ENCODE measurements at regions of chr5 and their contacts with region 1.

Region 1: DNA sequence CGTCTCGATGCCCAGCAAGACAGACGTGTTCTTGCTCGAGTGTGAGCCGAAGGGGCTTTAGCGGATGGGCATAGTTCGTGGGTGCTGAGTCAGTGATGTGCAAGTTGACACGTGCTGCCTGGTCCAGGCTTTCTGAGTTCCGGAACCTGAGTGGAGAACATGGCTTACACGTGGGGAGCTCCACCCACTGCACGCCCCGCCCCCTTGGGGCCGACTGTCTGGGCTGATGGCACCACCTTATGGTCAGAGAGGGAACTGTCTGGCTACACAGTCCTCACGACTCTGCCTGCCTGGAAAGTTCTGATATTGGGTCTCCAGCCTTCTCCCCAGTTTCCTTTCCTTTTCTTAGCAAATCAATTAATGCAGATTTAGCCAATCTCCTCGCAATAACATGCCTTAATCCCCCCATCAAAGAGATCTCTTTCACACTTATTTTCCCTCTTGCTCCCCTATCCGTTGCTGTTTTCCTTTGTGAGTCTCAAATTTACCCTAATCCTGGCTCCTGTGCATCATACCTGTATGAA is 3.8 kb upstream of the STC2 start:
- DNase-seq: peak; percentile 95
- H3K4me3 Mint-ChIP-seq: no peak overlapping the region
- H3K27ac Mint-ChIP-seq: no peak overlapping the region
- H3K4me1 Mint-ChIP-seq: peaks cover 20% of the 10 kb centered on the region
- H3K27me3 Mint-ChIP-seq: peaks cover 37% of the 10 kb centered on the region

Region 2: GRCh38 chr5:172559004-172559932 is 772.8 kb before region 1 on chr5:
- CTCF ChIA-PET with region 1: no interaction called
- intact Hi-C with region 1: no loop called
- DNase-seq: no peak
- H3K4me3 Mint-ChIP-seq: no peak overlapping the region
- H3K27ac Mint-ChIP-seq: no peak overlapping the region
- H3K4me1 Mint-ChIP-seq: no peaks in the 10 kb centered on the region
- H3K27me3 Mint-ChIP-seq: peaks cover 4% of the 10 kb centered on the region

Region 3: GRCh38 chr5:172932313-172933017 is 399.6 kb before region 1 on chr5:
- CTCF ChIA-PET with region 1: no interaction called
- intact Hi-C with region 1: loop called (anchors 1 kb)
- DNase-seq: peak; percentile 79
- H3K4me3 Mint-ChIP-seq: no peak overlapping the region
- H3K27ac Mint-ChIP-seq: no peak overlapping the region
- H3K4me1 Mint-ChIP-seq: no peaks in the 10 kb centered on the region
- H3K27me3 Mint-ChIP-seq: no peaks in the 10 kb centered on the region

Region 4: DNA sequence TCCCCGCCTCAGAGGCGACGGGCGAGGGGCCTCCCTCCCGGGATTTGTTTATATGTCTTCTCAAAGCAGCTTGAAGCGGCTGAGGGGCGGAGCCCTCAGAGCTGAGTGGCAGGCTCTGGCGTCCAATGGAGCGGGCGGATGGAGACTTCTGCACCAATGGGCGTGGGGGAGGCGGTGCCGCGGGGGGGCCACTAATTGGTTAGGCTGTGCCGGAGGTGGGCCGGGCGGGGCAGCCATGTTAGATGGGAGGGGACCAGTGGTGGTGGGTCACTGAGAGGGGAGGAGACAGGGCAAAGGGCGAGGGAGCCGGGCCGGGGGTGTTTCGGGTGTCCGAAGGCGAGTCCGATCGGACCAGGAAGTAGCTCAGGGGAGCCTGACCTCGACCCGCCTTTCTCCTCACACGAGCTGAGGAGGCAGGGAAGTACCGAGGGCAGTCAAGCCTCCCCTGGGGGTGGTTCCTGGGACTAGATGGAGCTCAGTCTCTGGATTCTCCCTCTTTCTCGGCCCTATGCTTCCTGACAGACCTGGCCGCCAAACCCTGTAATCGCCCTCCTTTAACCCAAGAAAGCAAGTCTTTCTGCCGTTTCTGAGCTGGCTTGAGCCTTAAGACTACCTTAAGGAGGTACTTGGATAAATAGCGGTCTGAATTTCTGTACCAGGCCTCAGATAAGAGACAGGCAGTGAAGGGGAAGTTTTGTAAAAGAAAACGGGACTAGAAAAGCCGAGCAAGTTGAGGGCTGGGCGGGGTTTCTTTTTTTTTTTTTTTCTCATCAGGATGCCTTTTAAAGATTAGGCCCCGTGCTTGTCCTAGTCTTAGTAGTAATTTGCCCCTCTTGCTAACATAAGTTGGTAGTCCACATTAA is 274.7 kb before region 1 on chr5:
- CTCF ChIA-PET with region 1: no interaction called
- intact Hi-C with region 1: loop called (anchors 1 kb)
- DNase-seq: peak; percentile 100
- H3K4me3 Mint-ChIP-seq: peak overlapping the region; percentile 91
- H3K27ac Mint-ChIP-seq: peak overlapping the region; percentile 97
- H3K4me1 Mint-ChIP-seq: peaks cover 51% of the 10 kb centered on the region
- H3K27me3 Mint-ChIP-seq: no peaks in the 10 kb centered on the region

Region 5: DNA sequence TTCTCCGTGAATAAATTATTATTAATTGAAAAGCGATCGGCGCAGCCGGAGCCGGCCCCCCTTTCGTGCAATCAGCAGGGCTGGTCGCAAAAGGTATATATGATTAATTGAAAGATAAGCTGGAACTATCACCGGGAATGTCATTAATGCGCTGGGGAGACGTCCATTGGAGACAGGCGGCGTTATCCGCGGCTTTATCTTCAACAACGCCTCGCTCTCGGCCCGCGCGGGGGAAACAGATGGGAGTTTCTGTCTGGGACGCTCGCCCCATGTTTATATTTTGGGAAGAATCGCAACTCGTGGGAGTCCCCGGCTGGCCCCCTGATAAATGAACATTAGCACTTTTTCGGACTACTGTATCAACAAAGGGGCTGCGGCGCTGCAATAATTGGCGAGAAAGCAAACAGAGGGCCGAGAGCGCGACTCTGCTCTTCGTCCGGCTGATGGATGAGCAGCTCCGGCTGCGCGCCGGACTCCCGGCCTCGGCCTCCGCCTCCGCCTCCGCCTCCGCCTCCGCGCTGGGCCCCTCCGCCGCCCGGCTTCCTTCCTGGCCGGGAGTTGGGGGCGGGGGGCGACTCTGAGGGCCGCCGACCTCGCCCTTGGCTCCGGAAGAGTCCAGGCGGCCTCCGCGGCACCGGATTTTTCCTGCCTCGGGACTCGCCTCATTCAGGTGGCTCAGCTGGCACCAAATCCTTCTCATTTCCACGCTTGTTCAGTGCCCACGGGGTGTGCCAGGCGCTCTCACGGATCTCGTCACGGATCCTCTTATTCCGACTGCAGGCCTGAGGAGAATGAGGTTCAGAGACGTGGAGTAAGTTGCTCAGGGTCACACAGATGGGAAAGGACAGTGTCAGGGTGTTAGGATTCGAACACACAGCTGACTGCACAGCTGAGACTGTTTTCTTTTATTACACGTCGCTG is 93.4 kb before region 1 on chr5:
- CTCF ChIA-PET with region 1: interaction called, 3 read pairs
- intact Hi-C with region 1: loop called (anchors 2 kb)
- DNase-seq: no peak
- H3K4me3 Mint-ChIP-seq: peak overlapping the region; percentile 47
- H3K27ac Mint-ChIP-seq: no peak overlapping the region
- H3K4me1 Mint-ChIP-seq: peaks cover 45% of the 10 kb centered on the region
- H3K27me3 Mint-ChIP-seq: peaks cover 85% of the 10 kb centered on the region

Region 6: GRCh38 chr5:173256800-173257199 is 75.2 kb before region 1 on chr5:
- CTCF ChIA-PET with region 1: no interaction called
- intact Hi-C with region 1: no loop called
- DNase-seq: no peak
- H3K4me3 Mint-ChIP-seq: no peak overlapping the region
- H3K27ac Mint-ChIP-seq: no peak overlapping the region
- H3K4me1 Mint-ChIP-seq: peaks cover 5% of the 10 kb centered on the region
- H3K27me3 Mint-ChIP-seq: peaks cover 23% of the 10 kb centered on the region

Region 7: DNA sequence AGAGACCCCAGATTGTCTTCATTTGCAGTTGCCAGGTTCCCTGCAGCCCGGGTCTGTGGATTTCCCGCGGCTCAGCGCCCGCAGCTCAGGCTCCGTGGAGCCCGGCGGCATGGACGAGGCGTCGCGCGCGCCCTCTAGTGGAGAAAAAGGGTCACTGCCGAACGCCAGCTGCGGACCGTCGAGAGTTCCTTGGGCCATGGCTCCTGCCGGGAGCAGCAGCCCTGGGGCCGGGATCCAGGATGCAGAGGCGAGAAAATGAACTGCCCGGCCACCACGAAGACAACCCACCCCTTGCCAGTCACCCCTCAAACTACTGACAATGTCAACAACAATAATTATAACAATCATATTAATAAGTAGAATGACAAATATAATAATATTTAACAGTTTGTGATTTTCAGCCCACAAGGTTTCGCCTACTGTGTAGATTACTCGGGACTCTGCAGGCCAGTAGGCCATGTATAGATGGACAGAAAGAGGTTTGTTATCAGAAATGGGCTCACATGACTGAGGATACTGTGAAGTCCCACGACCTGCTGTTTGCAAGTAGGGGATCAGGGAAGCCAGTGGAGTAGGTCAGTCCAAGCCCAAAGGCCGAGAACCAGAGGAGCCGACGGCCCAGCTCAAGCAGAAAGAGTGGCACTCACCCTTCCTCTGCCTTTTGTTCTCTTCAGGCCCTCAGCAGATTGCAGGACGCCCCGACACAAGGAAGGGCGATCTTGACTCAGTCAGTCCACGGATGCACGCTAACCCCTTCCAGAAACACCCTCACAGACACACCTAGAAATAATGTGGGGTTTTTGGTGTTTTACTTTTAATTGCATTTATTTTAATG is 241.3 kb after region 1 on chr5:
- CTCF ChIA-PET with region 1: interaction called, 3 read pairs
- intact Hi-C with region 1: loop called (anchors 2 kb)
- DNase-seq: peak; percentile 70
- H3K4me3 Mint-ChIP-seq: no peak overlapping the region
- H3K27ac Mint-ChIP-seq: no peak overlapping the region
- H3K4me1 Mint-ChIP-seq: peaks cover 6% of the 10 kb centered on the region
- H3K27me3 Mint-ChIP-seq: peaks cover 13% of the 10 kb centered on the region

Region 8: DNA sequence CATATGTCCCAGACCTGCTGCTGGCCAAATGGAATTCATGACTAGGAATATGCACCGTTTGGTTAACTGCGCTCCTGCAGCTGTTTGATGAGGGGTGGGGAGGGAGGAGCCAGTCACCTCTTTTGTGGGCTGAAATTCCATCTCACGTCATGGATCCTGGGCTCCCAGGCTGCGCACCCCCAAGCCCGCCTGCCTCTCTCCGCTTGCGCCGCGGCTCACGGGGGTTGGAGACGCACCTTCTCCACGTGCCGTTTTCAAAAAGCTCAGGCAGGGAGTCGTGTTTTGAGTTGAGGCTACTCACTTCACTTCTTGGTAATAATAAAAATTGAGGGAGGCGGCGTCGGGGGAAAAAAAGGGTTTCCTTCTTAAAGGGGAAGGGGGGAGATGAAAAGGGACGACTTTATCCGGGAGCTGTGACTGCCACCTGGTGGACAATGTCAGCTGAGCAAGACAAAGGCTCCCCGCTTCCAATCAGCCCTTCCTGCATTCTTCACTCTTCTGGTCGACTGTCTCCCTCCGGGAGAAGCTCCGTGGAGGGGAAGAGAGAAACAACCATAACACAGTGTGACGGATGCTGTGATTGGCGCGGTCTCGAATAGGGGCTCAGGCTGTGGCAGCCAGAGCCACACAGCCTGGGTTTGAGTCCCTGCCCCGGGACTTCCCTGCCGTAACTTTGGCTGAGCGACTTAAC is 641.1 kb after region 1 on chr5:
- CTCF ChIA-PET with region 1: no interaction called
- intact Hi-C with region 1: loop called (anchors 10 kb)
- DNase-seq: peak; percentile 90
- H3K4me3 Mint-ChIP-seq: peak overlapping the region; percentile 71
- H3K27ac Mint-ChIP-seq: peak overlapping the region; percentile 47
- H3K4me1 Mint-ChIP-seq: peaks cover 8% of the 10 kb centered on the region
- H3K27me3 Mint-ChIP-seq: peaks cover 8% of the 10 kb centered on the region